Activated T-helper 2 cell treated with anti-CD3 and anti-CD28 coated beads, Interferon-gamma antibody, Interleukin-2, Interleukin-4, amounts not matched to agents 10 μg/mL and 5 μg/mL and 100 μg/mL, durations not matched to agents 14 hours and 24 hours and 36 hours (primary cell): ENCODE measurements at regions of chr3 and their contacts with region 1.

Region 1: GRCh38 chr3:138941259-138941885 is 5.6 kb downstream of the FOXL2 start:
- DNase-seq: no peak
- H3K4me3 Mint-ChIP-seq: no peak overlapping the region
- H3K27ac Mint-ChIP-seq: no peak overlapping the region
- H3K4me1 Mint-ChIP-seq: peaks cover 20% of the 10 kb centered on the region
- H3K27me3 Mint-ChIP-seq: peaks cover 81% of the 10 kb centered on the region

Region 2: DNA sequence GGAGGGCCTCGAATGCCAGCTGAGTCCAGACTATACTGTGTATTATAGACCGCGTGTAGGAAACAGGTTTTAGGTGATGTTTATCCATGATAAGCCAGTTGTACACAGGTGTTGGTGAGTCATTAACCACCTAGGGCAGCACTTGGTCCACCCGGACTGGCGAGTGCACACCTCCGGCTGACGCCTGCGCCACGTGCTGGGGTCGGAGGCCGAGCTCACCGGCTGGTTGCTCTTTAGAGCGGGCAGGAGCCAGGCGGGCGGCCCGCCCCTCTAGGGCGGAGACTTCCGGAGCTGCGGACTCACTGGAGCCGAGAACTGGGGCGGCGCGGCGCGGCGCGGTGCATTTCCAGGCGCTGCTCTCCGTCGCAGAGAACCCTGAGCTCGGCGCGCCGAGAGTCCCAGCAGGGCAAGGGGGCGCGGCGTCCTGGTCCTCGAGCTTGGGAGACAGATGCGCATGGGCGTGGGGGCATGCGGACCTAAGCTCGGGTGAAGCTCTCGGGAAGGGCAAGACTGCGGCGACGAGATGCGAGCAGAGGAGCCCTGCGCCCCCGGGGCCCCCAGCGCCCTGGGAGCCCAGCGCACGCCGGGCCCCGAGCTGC is 507.0 kb before region 1 on chr3 and contains the start of gene ESYT3:
- intact Hi-C with region 1: loop called (anchors 5 kb)
- DNase-seq: peak; percentile 57
- H3K4me3 Mint-ChIP-seq: peak within 1 kb of the TSS; percentile 70
- H3K27ac Mint-ChIP-seq: no peak within 1 kb of the TSS
- H3K4me1 Mint-ChIP-seq: peaks cover 8% of the 10 kb centered on the region
- H3K27me3 Mint-ChIP-seq: peaks cover 62% of the 10 kb centered on the region
- total RNA-seq, gene ESYT3: 0.09 and 0.32 TPM in 2 replicates